Activated B cell treated with CpG ODN at 0.5 μM for 24 hours (primary cell): ENCODE measurements at regions of chr1 and their contacts with region 1.

Region 1: GRCh38 chr1:88655685-88656299 is 28.3 kb upstream of the PKN2 start:
- DNase-seq: no peak
- ATAC-seq: no peak
- H3K4me3 Mint-ChIP-seq: no peak overlapping the region
- H3K27ac Mint-ChIP-seq: no peak overlapping the region
- H3K4me1 Mint-ChIP-seq: no peaks in the 10 kb centered on the region
- H3K27me3 Mint-ChIP-seq: peaks cover 2% of the 10 kb centered on the region
- CTCF ChIP-seq: no peak

Region 2: GRCh38 chr1:88701275-88701674 is 45.5 kb after region 1 on chr1:
- CTCF ChIA-PET with region 1: interaction called, 4 read pairs
- POLR2A ChIA-PET with region 1: no interaction called
- intact Hi-C with region 1: loop called (anchors 5 kb)
- DNase-seq: no peak
- ATAC-seq: peak; percentile 95
- H3K4me3 Mint-ChIP-seq: no peak overlapping the region
- H3K27ac Mint-ChIP-seq: peak overlapping the region; percentile 59
- H3K4me1 Mint-ChIP-seq: peaks cover 51% of the 10 kb centered on the region
- H3K27me3 Mint-ChIP-seq: no peaks in the 10 kb centered on the region
- CTCF ChIP-seq: no peak

Region 3: DNA sequence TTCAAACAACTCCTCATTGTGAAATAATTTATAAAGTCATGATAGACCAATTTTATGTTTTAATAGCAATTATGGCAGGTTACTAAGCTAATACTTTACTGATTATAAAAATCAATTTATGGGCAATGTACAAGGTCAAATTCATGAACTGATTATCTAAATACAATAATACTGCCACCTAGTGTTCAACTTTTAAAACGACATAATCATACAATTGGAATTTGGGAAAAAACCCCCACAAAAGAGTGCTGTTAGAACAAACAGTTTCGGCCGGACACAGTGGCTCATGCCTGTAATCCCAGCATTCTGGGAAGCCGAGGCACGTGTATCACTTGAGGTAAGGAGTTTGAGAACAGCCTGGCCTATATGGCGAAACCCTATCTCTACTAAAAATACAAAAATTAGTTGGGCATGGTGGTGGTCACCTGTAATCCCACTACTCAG is 221.6 kb after region 1 on chr1:
- CTCF ChIA-PET with region 1: interaction called, 62 read pairs
- POLR2A ChIA-PET with region 1: no interaction called
- intact Hi-C with region 1: loop called (anchors 1 kb)
- DNase-seq: no peak
- ATAC-seq: no peak
- H3K4me3 Mint-ChIP-seq: no peak overlapping the region
- H3K27ac Mint-ChIP-seq: peak overlapping the region; percentile 14
- H3K4me1 Mint-ChIP-seq: peaks cover 24% of the 10 kb centered on the region
- H3K27me3 Mint-ChIP-seq: no peaks in the 10 kb centered on the region
- CTCF ChIP-seq: peak; percentile 51